Naive thymus-derived CD4-positive, alpha-beta T cell (primary cell): ENCODE measurements at regions of chr5 and their contacts with region 1.

Region 1: DNA sequence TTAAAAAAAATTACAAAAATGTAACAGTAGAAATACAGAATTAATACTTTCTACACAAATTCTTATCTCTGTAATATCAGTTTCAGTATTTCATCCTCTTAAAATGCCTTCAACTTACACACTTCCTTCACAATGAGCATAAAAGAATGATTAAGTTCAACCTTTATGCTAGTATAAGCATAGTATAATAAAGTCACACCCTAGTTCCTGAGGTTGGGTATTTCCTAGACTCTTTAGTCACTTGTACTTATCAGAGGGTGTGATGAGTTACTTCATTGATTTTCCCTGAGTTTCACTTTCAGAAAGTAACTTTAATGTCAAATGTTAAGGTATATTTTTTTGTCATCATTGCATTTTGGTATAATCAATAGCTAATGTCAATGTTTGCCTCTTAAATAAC is 302.4 kb downstream of the PDE4D start:
- DNase-seq: no peak
- ATAC-seq: peak; percentile 42
- H3K4me3 ChIP-seq: no peak overlapping the region
- H3K4me3 Mint-ChIP-seq: no peak overlapping the region
- H3K27ac ChIP-seq: no peak overlapping the region
- H3K27ac Mint-ChIP-seq: peak overlapping the region in 1 of 9 donors; percentile 65
- H3K4me1 ChIP-seq: no peaks in the 10 kb centered on the region
- H3K4me1 Mint-ChIP-seq: peaks cover 0 to 27% (median 0%) of the 10 kb centered on the region in 7 donors
- H3K27me3 ChIP-seq: no peaks in the 10 kb centered on the region
- H3K27me3 Mint-ChIP-seq: peaks cover 9 to 32% (median 12%) of the 10 kb centered on the region in 5 donors

Region 2: GRCh38 chr5:59608745-59609144 is 17.6 kb after region 1 on chr5:
- CTCF ChIA-PET with region 1: no interaction called
- POLR2A ChIA-PET with region 1: no interaction called
- intact Hi-C with region 1: loop called in 1 of 2 experiments (anchors 1 kb)
- DNase-seq: no peak
- ATAC-seq: no peak
- H3K4me3 ChIP-seq: no peak overlapping the region
- H3K4me3 Mint-ChIP-seq: no peak overlapping the region
- H3K27ac ChIP-seq: no peak overlapping the region
- H3K27ac Mint-ChIP-seq: no peak overlapping the region
- H3K4me1 ChIP-seq: no peaks in the 10 kb centered on the region
- H3K4me1 Mint-ChIP-seq: peaks cover 0 to 21% (median 0%) of the 10 kb centered on the region in 7 donors
- H3K27me3 ChIP-seq: no peaks in the 10 kb centered on the region
- H3K27me3 Mint-ChIP-seq: peaks cover 0 to 23% (median 10%) of the 10 kb centered on the region in 5 donors